ENCODE measurements at regions of chr6 and their contacts with region 1.

Region 1: DNA sequence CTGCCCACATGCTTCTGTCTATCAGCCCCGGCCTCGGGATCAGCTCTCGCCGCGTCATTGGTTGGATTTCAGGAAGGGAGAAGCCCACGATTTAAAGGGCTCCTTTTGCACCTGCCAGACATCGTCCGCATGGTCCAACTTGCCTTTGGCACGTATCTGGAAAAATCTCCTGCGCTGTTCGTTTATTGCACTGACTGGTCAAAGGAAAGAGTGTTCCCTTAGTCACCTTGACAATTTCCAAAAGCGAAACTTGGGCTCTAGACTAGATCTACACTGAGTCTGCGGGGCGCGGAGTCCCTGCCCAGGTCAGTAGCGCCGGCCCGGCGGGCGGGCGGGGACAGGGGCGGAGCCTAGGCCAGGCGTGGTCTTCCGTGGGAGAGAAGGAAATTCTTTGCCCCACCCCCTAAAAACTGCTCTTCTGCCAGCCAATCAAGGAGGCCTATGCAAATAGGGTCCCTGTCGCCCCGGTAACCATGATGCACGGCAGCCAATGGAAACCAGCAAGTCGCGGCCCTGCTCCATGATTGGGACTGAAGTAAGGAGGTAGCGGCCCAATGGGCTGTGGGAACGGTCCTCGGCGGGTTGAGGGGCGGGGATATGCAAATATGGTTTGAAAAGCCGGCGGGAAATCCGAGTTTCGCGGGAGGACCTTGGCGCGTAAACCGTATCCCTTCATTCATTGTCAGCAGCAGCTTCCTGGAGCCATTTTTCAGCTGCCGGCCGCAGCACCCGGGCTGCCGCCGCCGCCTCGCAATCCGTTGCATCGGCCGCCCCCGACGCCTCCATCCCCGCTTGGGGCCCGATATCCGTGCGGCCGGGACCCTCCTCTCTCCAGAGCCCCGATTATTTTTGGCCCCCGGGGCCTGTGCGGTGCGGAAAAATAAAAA is at the start of gene E2F3:
- DNase-seq: peak; percentile 99 to 100
- H3K4me3 ChIP-seq: peak within 1 kb of the TSS; percentile 93
- H3K27ac ChIP-seq: peak within 1 kb of the TSS; percentile 95
- H3K4me1 ChIP-seq: peaks cover 16% of the 10 kb centered on the region
- H3K27me3 ChIP-seq: no peaks in the 10 kb centered on the region
- CTCF ChIP-seq: no peak
- total RNA-seq, gene E2F3: 15.7 and 20.0 TPM in 2 replicates

Region 2: DNA sequence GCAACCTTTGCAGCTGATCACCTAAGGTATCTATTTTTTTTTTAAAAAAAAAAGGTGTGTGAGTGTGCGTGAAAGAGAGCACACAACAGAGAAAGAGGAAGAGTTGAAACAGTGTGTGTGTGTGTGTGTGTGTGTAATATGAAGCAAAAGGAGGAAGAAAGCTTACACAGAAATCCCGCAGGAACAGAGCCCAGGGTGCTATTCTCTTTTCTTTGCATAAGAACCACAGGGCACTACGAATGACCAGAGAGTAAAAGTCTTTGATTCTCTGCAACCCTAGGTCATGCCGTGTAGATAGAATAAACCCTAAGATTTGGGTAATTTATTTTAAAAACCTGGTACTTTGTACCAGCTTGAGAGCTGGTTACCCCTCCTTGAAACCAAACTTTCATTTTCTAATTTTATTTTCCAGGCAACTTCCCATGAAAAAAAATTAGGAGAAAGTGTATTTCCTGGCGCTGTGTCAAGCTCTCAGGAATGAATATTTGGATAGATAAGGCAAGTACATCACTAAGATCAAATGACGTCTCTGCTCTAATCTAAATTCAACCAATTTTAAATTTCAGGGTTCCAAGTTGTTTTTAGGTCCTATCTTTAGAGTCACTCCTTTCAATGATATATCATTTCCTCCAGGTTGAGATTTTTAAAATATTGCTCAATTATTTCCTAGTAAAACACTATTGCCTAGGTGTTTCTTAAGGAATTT is 612.2 kb before region 1 on chr6:
- CTCF ChIA-PET with region 1: no interaction called
- POLR2A ChIA-PET with region 1: no interaction called
- intact Hi-C with region 1: no loop called
- DNase-seq: no peak
- H3K4me3 ChIP-seq: no peak overlapping the region
- H3K27ac ChIP-seq: no peak overlapping the region
- H3K4me1 ChIP-seq: no peaks in the 10 kb centered on the region
- H3K27me3 ChIP-seq: no peaks in the 10 kb centered on the region
- CTCF ChIP-seq: no peak

Region 3: GRCh38 chr6:20117474-20117873 is 284.0 kb before region 1 on chr6:
- CTCF ChIA-PET with region 1: no interaction called
- POLR2A ChIA-PET with region 1: no interaction called
- intact Hi-C with region 1: loop called (anchors 5 kb)
- DNase-seq: peak; percentile 82 to 91
- H3K4me3 ChIP-seq: no peak overlapping the region
- H3K27ac ChIP-seq: peak overlapping the region; percentile 58
- H3K4me1 ChIP-seq: peaks cover 21% of the 10 kb centered on the region
- H3K27me3 ChIP-seq: no peaks in the 10 kb centered on the region
- CTCF ChIP-seq: no peak

Region 4: DNA sequence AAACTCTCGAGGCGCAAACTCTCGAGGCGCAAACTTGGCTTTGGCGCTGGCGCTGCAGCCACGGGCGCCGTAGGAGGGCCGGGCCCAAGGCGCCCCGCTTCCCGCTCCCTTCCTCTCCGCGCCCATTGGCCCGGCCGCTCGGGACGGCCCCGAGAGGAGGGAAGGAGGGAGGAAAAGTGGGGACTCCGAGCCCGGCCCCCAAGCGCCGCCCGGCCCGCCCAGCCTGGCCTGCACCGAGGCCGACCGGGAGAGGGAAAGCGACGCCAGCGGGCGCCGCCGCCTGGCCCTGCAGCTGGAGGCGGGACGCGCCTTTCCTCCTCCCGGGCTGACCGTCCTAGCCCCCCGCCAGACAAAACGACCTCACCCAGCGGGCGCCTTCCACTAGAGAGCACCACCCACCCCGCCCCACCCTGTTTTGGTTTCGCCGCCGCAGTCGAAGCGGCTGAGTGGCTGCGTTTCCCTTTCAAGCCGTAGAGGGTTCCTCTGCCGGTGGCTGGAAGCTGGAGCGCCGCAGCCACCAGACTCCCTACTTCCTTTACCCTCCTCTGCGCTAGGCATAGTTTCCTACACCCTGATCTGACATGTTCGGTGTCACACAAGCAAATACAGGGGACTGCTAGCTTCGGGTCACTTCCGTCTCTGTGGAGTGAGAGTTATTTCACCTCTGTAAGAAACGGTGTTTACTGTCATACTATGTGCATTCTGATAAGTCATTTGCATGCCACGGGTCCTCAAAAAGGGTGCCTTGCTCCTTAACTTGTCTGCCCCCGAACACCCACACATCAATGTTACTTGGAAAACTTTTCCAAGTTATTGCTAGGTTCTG is 188.8 kb before region 1 on chr6 and contains the start of gene MBOAT1:
- CTCF ChIA-PET with region 1: no interaction called
- POLR2A ChIA-PET with region 1: no interaction called
- intact Hi-C with region 1: loop called (anchors 1 kb)
- DNase-seq: peak; percentile 79 to 98
- H3K4me3 ChIP-seq: peak within 1 kb of the TSS; percentile 83
- H3K27ac ChIP-seq: peak within 1 kb of the TSS; percentile 80
- H3K4me1 ChIP-seq: peaks cover 9% of the 10 kb centered on the region
- H3K27me3 ChIP-seq: no peaks in the 10 kb centered on the region
- CTCF ChIP-seq: no peak
- total RNA-seq, gene MBOAT1: 19.7 and 22.0 TPM in 2 replicates

Region 5: DNA sequence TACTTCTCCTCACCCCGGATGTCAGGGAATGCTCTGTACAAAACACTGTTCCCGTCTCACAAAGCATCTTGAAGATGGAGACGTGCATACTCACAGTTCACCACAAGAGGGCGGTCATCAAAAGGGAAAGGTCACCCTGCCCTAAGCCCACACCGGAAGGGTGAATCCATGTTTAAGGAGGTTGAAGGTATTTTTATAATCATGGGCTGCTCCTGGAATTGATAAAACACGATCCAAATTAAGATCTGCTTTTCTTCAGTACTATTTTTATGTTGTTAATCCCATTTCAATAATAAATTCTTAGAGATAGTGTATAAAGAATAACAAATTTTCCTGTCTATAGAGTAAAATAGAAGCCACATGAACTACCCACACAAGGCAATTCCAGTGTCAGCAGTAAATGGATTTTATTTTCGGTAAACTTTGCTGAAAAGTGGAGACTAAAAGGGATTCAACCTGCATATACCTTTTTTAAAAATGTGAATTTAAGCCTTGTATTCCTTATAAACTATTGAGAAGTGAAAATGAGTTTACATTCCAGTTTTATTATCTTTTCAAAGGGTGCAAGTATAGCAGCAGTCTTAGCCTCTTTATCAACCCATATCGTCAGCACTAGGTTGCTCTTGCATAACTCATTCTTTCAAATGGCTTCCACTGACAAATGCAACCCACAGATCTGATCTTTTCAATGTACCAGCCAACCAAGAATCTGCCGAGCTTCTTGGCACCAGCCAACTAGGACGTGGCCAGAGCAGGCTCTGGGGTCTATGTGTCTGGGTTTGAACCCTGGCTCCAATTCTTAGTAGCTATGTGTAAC is 109.5 kb before region 1 on chr6:
- CTCF ChIA-PET with region 1: no interaction called
- POLR2A ChIA-PET with region 1: no interaction called
- intact Hi-C with region 1: loop called (anchors 5 kb)
- DNase-seq: peak; percentile 53 to 71
- H3K4me3 ChIP-seq: no peak overlapping the region
- H3K27ac ChIP-seq: no peak overlapping the region
- H3K4me1 ChIP-seq: no peaks in the 10 kb centered on the region
- H3K27me3 ChIP-seq: no peaks in the 10 kb centered on the region
- CTCF ChIP-seq: peak; percentile 95

Region 6: GRCh38 chr6:20877008-20877937 is 475.8 kb after region 1 on chr6:
- CTCF ChIA-PET with region 1: no interaction called
- POLR2A ChIA-PET with region 1: no interaction called
- intact Hi-C with region 1: loop called (anchors 5 kb)
- DNase-seq: peak; percentile 89 to 99
- H3K4me3 ChIP-seq: 0 out of 2 replicates have a peak overlapping the region, but pooled peaks have one; percentile 0
- H3K27ac ChIP-seq: peak overlapping the region; percentile 90
- H3K4me1 ChIP-seq: peaks cover 42% of the 10 kb centered on the region
- H3K27me3 ChIP-seq: no peaks in the 10 kb centered on the region
- CTCF ChIP-seq: no peak

Region 7: GRCh38 chr6:20933057-20933788 is 531.8 kb after region 1 on chr6:
- CTCF ChIA-PET with region 1: no interaction called
- POLR2A ChIA-PET with region 1: no interaction called
- intact Hi-C with region 1: no loop called
- DNase-seq: peak in 1 of 2 experiments; percentile 46
- H3K4me3 ChIP-seq: no peak overlapping the region
- H3K27ac ChIP-seq: no peak overlapping the region
- H3K4me1 ChIP-seq: peaks cover 18% of the 10 kb centered on the region
- H3K27me3 ChIP-seq: no peaks in the 10 kb centered on the region
- CTCF ChIP-seq: no peak